ENCODE measurements at regions of chr16 and their contacts with region 1.

Region 1: DNA sequence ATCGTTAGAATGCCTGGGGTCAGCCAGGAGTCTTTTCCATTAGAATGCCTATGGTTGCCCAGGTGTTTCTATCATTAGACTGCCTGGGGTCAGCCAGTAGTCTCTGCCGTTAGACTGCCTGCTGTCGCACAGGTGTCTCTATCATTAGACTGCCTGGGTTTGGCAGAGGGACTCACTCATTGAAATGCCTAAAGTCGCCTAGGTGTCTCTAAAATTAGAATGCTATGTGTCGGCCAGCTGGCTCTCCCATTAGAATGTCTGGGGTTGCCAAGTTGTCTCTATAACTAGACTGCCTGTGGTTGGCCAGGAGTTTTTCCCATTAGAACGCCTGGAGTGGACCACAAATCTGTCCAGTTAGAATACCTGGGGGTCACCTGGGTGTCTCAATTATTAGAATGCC is 2266.5 kb downstream of the TP53TG3F start:
- DNase-seq: no peak

Region 2: GRCh38 chr16:35795361-35796029 is 69.5 kb after region 1 on chr16:
- intact Hi-C with region 1: loop called (anchors 5 kb)
- DNase-seq: no peak

Region 3: DNA sequence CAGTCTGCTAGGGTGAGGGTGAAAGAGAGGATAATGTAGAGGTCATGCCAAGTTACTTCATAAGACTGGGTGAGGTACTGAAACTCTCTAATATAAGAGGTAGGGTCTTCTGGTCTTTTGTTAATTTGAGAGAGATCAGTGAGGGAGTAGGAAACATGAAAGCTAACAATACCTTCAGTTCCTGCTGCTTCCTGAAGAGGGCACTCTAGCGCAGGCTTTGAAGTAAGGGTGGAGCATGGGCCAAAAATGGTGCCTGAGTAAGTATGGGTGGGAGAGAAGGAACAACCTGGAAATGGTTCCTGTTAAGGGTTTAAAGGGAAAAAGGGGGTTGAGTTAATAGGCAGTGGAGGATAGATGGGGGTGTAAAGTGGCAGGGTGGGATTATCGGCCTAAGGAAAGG is 183.0 kb after region 1 on chr16:
- intact Hi-C with region 1: no loop called
- DNase-seq: no peak

Measured in cardiac septum (tissue), 1 donor.